Endothelial cell of umbilical vein (primary cell): ENCODE measurements at regions of chr13 and their contacts with region 1.

Region 1: GRCh38 chr13:20828539-20829364 is 55.0 kb upstream of the EEF1AKMT1 start:
- DNase-seq: peak; percentile 71
- H3K4me3 ChIP-seq: peak overlapping the region in 1 of 3 experiments; percentile 48
- H3K27ac ChIP-seq: peak overlapping the region; percentile 44
- H3K4me1 ChIP-seq: peaks cover 3% of the 10 kb centered on the region
- H3K27me3 ChIP-seq: no peaks in the 10 kb centered on the region
- CTCF ChIP-seq: peak; percentile 52 to 57
- POLR2A ChIP-seq: no peak

Region 2: GRCh38 chr13:20495082-20496023 is 333.4 kb before region 1 on chr13:
- CTCF ChIA-PET with region 1: interaction called, 31 read pairs
- POLR2A ChIA-PET with region 1: no interaction called
- dilution Hi-C with region 1: no loop called
- intact Hi-C with region 1: loop called (anchors 1 kb)
- DNase-seq: peak; percentile 76
- H3K4me3 ChIP-seq: no peak overlapping the region
- H3K27ac ChIP-seq: peak overlapping the region; percentile 34
- H3K4me1 ChIP-seq: peaks cover 4% of the 10 kb centered on the region
- H3K27me3 ChIP-seq: no peaks in the 10 kb centered on the region
- CTCF ChIP-seq: peak; percentile 73
- POLR2A ChIP-seq: no peak

Region 3: DNA sequence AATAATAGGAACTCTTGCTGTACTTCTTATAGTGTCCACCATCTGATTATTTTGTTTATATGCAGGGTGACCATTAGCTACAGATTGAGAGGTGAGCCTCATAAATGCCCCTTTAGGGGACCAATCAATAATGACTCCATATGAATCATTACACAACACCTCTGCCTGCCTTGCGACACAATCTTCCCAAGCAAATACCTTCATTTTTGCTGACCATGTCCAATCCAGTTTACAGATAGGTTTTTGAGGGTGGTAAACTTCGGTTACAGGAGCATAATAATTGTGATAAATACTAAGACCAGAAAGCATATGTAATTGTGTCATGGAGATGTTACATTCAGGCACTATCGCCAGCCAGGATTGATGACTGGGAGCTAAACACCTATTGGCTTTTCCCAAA is 148.9 kb before region 1 on chr13:
- CTCF ChIA-PET with region 1: no interaction called
- POLR2A ChIA-PET with region 1: no interaction called
- dilution Hi-C with region 1: no loop called
- intact Hi-C with region 1: no loop called
- DNase-seq: no peak
- H3K4me3 ChIP-seq: no peak overlapping the region
- H3K27ac ChIP-seq: no peak overlapping the region
- H3K4me1 ChIP-seq: no peaks in the 10 kb centered on the region
- H3K27me3 ChIP-seq: no peaks in the 10 kb centered on the region
- CTCF ChIP-seq: no peak
- POLR2A ChIP-seq: no peak

Region 4: DNA sequence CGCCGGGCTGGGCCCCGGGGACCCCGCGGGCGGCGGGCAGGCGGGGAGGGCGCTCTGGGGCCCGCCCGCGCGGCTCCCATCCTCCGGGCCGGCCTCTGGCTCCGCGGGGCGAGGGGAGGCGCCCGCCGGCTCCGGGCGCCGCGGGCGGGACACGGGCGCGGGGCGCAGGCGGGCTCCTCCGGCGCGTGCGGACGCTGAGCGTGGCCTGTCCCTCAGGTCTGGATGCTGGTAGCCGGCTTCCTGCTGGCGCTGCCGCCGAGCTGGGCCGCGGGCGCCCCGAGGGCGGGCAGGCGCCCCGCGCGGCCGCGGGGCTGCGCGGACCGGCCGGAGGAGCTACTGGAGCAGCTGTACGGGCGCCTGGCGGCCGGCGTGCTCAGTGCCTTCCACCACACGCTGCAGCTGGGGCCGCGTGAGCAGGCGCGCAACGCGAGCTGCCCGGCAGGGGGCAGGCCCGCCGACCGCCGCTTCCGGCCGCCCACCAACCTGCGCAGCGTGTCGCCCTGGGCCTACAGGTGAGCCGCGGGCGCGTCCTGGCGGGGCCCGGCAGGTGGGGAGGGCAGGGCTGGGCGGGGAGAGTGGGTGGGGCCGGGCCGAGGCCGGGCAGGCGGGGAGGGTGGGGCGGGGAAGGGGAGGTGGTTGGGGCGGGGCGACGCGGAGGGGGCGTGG is 124.8 kb before region 1 on chr13:
- CTCF ChIA-PET with region 1: interaction called, 92 read pairs
- POLR2A ChIA-PET with region 1: interaction called, 3 read pairs
- dilution Hi-C with region 1: no loop called
- intact Hi-C with region 1: no loop called
- DNase-seq: peak; percentile 66
- H3K4me3 ChIP-seq: peak overlapping the region in 2 of 3 experiments; percentile 49 to 52
- H3K27ac ChIP-seq: no peak overlapping the region
- H3K4me1 ChIP-seq: peaks cover 8% of the 10 kb centered on the region
- H3K27me3 ChIP-seq: no peaks in the 10 kb centered on the region
- CTCF ChIP-seq: peak; percentile 64 to 69
- POLR2A ChIP-seq: peak; percentile 26

Region 5: DNA sequence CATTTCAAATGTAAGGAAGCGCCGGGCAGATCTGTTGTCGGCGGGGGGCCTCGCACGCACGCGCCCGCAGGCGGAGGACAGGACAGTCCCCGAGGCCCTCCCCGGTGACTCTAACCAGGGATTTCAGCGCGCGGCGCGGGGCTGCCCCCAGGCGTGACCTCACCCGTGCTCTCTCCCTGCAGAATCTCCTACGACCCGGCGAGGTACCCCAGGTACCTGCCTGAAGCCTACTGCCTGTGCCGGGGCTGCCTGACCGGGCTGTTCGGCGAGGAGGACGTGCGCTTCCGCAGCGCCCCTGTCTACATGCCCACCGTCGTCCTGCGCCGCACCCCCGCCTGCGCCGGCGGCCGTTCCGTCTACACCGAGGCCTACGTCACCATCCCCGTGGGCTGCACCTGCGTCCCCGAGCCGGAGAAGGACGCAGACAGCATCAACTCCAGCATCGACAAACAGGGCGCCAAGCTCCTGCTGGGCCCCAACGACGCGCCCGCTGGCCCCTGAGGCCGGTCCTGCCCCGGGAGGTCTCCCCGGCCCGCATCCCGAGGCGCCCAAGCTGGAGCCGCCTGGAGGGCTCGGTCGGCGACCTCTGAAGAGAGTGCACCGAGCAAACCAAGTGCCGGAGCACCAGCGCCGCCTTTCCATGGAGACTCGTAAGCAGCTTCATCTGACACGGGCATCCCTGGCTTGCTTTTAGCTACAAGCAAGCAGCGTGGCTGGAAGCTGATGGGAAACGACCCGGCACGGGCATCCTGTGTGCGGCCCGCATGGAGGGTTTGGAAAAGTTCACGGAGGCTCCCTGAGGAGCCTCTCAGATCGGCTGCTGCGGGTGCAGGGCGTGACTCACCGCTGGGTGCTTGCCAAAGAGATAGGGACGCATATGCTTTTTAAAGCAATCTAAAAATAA is 107.0 kb before region 1 on chr13:
- CTCF ChIA-PET with region 1: interaction called, 73 read pairs
- POLR2A ChIA-PET with region 1: no interaction called
- dilution Hi-C with region 1: no loop called
- intact Hi-C with region 1: no loop called
- DNase-seq: peak; percentile 68
- H3K4me3 ChIP-seq: peak overlapping the region in 2 of 3 experiments; percentile 3 to 27
- H3K27ac ChIP-seq: no peak overlapping the region
- H3K4me1 ChIP-seq: peaks cover 10% of the 10 kb centered on the region
- H3K27me3 ChIP-seq: no peaks in the 10 kb centered on the region
- CTCF ChIP-seq: peak in 1 of 2 donors; percentile 3
- POLR2A ChIP-seq: no peak

Region 6: GRCh38 chr13:20787180-20787579 is 41.6 kb before region 1 on chr13:
- CTCF ChIA-PET with region 1: interaction called, 8 read pairs
- POLR2A ChIA-PET with region 1: no interaction called
- dilution Hi-C with region 1: no loop called
- intact Hi-C with region 1: loop called (anchors 5 kb)
- DNase-seq: no peak
- H3K4me3 ChIP-seq: no peak overlapping the region
- H3K27ac ChIP-seq: no peak overlapping the region
- H3K4me1 ChIP-seq: peaks cover 43% of the 10 kb centered on the region
- H3K27me3 ChIP-seq: no peaks in the 10 kb centered on the region
- CTCF ChIP-seq: no peak
- POLR2A ChIP-seq: no peak

Region 7: GRCh38 chr13:20843166-20843565 is 14.4 kb after region 1 on chr13:
- CTCF ChIA-PET with region 1: interaction called, 25 read pairs
- POLR2A ChIA-PET with region 1: no interaction called
- dilution Hi-C with region 1: no loop called
- intact Hi-C with region 1: no loop called
- DNase-seq: peak; percentile 88
- H3K4me3 ChIP-seq: no peak overlapping the region
- H3K27ac ChIP-seq: no peak overlapping the region
- H3K4me1 ChIP-seq: peaks cover 5% of the 10 kb centered on the region
- H3K27me3 ChIP-seq: no peaks in the 10 kb centered on the region
- CTCF ChIP-seq: no peak
- POLR2A ChIP-seq: no peak

Region 8: DNA sequence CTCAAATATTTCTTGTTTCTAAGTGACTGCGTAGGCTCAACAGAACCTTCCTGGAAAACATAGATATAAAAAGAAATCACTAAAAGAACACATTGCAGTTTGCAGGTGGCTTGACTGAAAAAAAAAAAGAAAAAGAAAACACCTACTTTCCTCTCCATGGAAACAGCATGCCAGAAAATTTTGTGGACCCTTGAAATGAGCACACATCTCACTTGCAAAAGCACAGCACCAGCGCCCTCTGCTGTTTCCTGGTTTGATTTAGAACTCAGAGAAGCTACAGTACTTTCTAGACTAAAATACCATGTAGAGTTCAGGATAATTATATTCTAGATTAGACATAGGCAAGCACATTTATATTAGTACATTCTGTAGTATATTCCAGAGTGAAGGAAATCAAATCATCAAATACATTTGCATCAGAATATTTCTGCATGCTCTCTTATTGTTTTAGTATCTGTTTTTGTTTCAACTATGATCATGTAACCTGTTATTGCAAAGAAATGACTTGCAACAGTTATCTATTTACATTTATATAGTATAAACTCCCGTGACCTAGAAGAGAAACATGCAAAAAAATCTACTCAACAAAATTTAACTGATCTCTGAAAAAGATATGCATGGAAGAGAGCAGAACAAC is 96.1 kb after region 1 on chr13:
- CTCF ChIA-PET with region 1: interaction called, 37 read pairs
- POLR2A ChIA-PET with region 1: no interaction called
- dilution Hi-C with region 1: no loop called
- intact Hi-C with region 1: loop called (anchors 2 kb)
- DNase-seq: peak; percentile 81
- H3K4me3 ChIP-seq: no peak overlapping the region
- H3K27ac ChIP-seq: no peak overlapping the region
- H3K4me1 ChIP-seq: no peaks in the 10 kb centered on the region
- H3K27me3 ChIP-seq: no peaks in the 10 kb centered on the region
- CTCF ChIP-seq: peak; percentile 63 to 70
- POLR2A ChIP-seq: no peak

Region 9: DNA sequence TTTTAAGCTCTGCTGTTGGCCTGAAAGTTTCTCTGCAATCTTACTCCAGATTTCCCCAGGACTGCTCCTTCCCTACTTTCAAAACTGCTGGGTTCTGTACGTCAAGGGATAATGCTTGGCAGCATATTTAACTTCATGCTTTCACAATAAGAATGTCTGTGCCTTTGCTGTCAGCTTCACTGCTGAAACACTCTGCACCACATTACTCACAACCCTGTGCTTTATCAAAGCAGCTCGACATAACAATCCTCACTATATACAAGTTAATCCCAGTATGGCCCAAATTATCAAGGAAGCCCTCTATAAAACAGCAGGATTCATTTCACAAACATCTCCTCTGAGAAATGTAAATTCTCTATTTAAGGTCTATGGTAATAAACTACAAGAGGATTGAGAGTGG is 215.1 kb after region 1 on chr13:
- CTCF ChIA-PET with region 1: no interaction called
- POLR2A ChIA-PET with region 1: no interaction called
- dilution Hi-C with region 1: no loop called
- intact Hi-C with region 1: no loop called
- DNase-seq: no peak
- H3K4me3 ChIP-seq: no peak overlapping the region
- H3K27ac ChIP-seq: no peak overlapping the region
- H3K4me1 ChIP-seq: peaks cover 74% of the 10 kb centered on the region
- H3K27me3 ChIP-seq: no peaks in the 10 kb centered on the region
- CTCF ChIP-seq: no peak
- POLR2A ChIP-seq: no peak

Region 10: GRCh38 chr13:21106089-21106488 is 277.3 kb after region 1 on chr13:
- CTCF ChIA-PET with region 1: no interaction called
- POLR2A ChIA-PET with region 1: no interaction called
- dilution Hi-C with region 1: no loop called
- intact Hi-C with region 1: no loop called
- DNase-seq: no peak
- H3K4me3 ChIP-seq: no peak overlapping the region
- H3K27ac ChIP-seq: no peak overlapping the region
- H3K4me1 ChIP-seq: no peaks in the 10 kb centered on the region
- H3K27me3 ChIP-seq: no peaks in the 10 kb centered on the region
- CTCF ChIP-seq: no peak
- POLR2A ChIP-seq: no peak